ENCODE measurements at regions of chr2 and their contacts with region 1.

Region 1: DNA sequence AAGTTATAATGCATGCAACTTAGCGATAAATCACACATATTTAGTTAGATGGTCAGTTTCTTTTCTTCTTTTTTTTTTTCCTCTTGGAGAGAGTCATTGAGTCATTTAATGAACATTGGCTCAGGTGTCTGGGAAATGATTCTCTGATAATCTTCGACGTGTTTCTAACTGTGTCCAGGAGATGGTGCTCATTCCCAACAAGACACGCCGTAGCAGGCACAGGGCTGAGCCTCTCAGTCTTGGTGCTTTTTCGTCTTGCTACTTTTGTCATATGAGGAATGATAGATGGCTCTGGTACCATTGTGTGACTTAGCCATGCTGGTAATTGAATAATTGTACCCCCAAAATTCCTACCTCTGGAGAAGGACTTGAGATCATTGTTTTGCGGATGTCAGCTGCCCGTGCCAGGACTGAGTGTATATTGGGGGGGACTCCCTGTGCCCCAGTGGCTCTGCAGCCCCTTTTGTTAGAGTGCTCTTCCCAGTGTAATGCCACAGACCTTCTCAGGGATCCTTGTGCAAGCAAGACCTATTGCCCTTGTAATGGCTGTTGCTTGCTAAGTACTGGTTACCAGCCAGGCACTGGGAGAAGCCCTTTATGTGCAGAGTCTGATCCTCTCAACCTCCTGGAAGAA is 107.6 kb upstream of the CYRIA start:
- DNase-seq: no peak
- ATAC-seq: peak; percentile 68
- H3K4me3 ChIP-seq: no peak overlapping the region
- H3K27ac ChIP-seq: no peak overlapping the region
- H3K4me1 ChIP-seq: no peaks in the 10 kb centered on the region
- H3K27me3 ChIP-seq: no peaks in the 10 kb centered on the region

Region 2: DNA sequence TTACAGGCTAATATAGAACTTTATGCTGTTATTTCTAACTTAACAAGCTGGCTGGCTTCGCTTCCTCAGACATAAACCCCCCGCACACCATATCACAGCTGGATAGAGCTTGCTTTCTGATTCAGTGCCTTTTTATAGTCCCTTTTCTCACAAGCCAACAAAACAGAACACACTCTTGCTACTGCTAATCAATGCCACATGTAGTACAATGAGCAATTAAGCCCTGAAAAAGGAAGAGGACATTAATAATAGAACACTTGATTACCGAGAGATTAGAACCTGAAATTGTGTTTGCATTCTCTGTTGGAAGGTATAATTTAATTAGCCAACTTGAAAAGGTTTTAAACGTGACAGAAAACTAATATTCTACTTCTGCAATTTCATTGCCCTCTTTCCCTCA is 160.2 kb after region 1 on chr2:
- intact Hi-C with region 1: no loop called
- DNase-seq: no peak
- ATAC-seq: no peak
- H3K4me3 ChIP-seq: no peak overlapping the region
- H3K27ac ChIP-seq: no peak overlapping the region
- H3K4me1 ChIP-seq: no peaks in the 10 kb centered on the region
- H3K27me3 ChIP-seq: no peaks in the 10 kb centered on the region

Region 3: GRCh38 chr2:17672583-17673317 is 899.6 kb after region 1 on chr2:
- intact Hi-C with region 1: loop called in 1 of 2 experiments (anchors 10 kb)
- DNase-seq: no peak
- ATAC-seq: no peak
- H3K4me3 ChIP-seq: no peak overlapping the region
- H3K27ac ChIP-seq: no peak overlapping the region
- H3K4me1 ChIP-seq: no peaks in the 10 kb centered on the region
- H3K27me3 ChIP-seq: no peaks in the 10 kb centered on the region

Measured in aorta (tissue), 5 donors.